ENCODE measurements at regions of chrX and their contacts with region 1.

Region 1: GRCh38 chrX:70096052-70096451 is 33.8 kb downstream of the OTUD6A start:
- DNase-seq: no peak
- ATAC-seq: no peak

Region 2: DNA sequence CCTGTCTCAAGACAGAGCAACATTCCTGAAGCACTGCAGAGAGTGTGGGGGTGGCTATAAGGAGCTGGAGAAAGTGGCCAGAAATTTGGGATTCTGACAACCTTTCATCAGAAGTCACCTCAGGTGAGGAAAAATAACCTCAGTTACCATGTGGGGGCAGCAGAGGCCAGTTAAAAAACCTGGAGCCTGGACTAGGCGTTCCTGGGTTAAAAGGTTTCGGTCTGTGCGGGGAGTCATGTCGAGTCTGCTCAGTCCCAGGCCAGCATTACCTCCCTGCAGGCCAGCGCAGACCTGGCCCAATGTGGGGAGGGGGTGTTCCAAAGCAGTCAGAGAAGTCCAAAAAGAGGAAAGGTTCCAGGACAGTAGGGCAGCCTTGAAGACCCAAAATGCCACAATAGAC is 602.9 kb before region 1 on chrX:
- intact Hi-C with region 1: loop called (anchors 5 kb)
- DNase-seq: no peak
- ATAC-seq: no peak

Region 3: GRCh38 chrX:70030301-70030767 is 65.7 kb before region 1 on chrX:
- intact Hi-C with region 1: loop called (anchors 5 kb)
- DNase-seq: no peak
- ATAC-seq: peak; percentile 81

Measured in Right ventricle myocardium inferior (tissue), 1 donor.